ENCODE measurements at regions of chr4 and their contacts with region 1.

Region 1: GRCh38 chr4:8428293-8429097 is 12.0 kb downstream of the ACOX3 start:
- DNase-seq: peak; percentile 81 to 88 (median 88)
- H3K4me3 ChIP-seq: peak overlapping the region; percentile 53 to 93 (median 81)
- H3K27ac ChIP-seq: peak overlapping the region in 1 of 2 experiments; percentile 73
- H3K4me1 ChIP-seq: peaks cover 4 to 15% (median 15%) of the 10 kb centered on the region in 4 experiments
- H3K27me3 ChIP-seq: no peaks in the 10 kb centered on the region

Region 2: GRCh38 chr4:8236106-8236919 is 192.2 kb before region 1 on chr4:
- CTCF ChIA-PET with region 1: no interaction called
- POLR2A ChIA-PET with region 1: no interaction called
- DNase-seq: no peak
- H3K4me3 ChIP-seq: no peak overlapping the region
- H3K27ac ChIP-seq: no peak overlapping the region
- H3K4me1 ChIP-seq: peaks cover 0 to 25% (median 10%) of the 10 kb centered on the region in 4 experiments
- H3K27me3 ChIP-seq: no peaks in the 10 kb centered on the region

Region 3: GRCh38 chr4:8330821-8331574 is 97.5 kb before region 1 on chr4:
- CTCF ChIA-PET with region 1: no interaction called
- POLR2A ChIA-PET with region 1: no interaction called
- DNase-seq: no peak
- H3K4me3 ChIP-seq: no peak overlapping the region
- H3K27ac ChIP-seq: no peak overlapping the region
- H3K4me1 ChIP-seq: peaks cover 0 to 6% (median 4%) of the 10 kb centered on the region in 4 experiments
- H3K27me3 ChIP-seq: no peaks in the 10 kb centered on the region

Region 4: GRCh38 chr4:8410641-8411271 is 17.7 kb before region 1 on chr4:
- CTCF ChIA-PET with region 1: interaction called, 15 read pairs
- POLR2A ChIA-PET with region 1: no interaction called
- DNase-seq: peak; percentile 61 to 71 (median 61)
- H3K4me3 ChIP-seq: no peak overlapping the region
- H3K27ac ChIP-seq: no peak overlapping the region
- H3K4me1 ChIP-seq: peaks cover 0 to 12% (median 2%) of the 10 kb centered on the region in 4 experiments
- H3K27me3 ChIP-seq: no peaks in the 10 kb centered on the region

Region 5: GRCh38 chr4:8440492-8441341 is 12.2 kb after region 1 on chr4 and contains the starts of genes ACOX3 and TRMT44:
- CTCF ChIA-PET with region 1: interaction called, 16 read pairs
- POLR2A ChIA-PET with region 1: interaction called, 4 read pairs
- DNase-seq: peak; percentile 92 to 94 (median 93)
- H3K4me3 ChIP-seq: peak within 1 kb of the TSS; percentile 78 to 100 (median 98)
- H3K27ac ChIP-seq: peak within 1 kb of the TSS; percentile 95 to 98
- H3K4me1 ChIP-seq: peaks cover 9 to 40% (median 26%) of the 10 kb centered on the region in 4 experiments
- H3K27me3 ChIP-seq: no peaks in the 10 kb centered on the region

Region 6: DNA sequence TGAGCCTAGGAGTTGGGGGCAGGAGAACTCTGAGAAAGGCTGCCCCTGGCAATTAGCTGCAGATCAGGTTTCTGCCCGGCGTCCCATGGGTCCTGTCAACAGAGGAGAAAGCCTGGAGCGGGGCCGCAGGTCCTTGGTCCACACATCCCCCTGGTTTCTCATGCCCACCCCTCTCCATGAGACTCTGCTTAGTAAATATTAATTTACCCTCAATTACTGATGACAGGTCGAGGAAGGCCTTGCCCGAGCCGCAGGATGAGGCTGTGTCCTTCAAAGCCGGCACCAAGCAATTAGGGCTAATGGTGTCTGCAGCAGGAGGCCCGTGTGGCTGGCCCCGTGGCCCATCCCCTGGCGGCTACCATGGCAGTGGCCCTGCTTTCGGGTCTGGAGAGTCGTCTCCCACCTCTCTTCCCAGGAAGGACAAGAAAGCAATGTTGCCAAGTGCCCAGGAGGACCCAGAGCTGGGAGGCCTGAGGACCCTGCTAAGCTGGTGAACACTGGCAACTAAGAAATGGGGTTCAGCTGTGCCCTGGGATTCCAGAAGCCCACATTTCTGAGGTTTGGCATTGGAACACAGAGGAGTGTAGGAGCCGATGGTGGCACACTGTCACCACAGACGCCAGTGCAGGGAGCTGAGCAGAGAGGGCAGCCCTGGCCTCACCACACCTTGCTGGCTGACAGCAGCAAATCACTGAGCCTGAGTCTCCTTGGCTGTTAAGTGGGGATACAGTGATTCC is 278.7 kb after region 1 on chr4:
- CTCF ChIA-PET with region 1: no interaction called
- POLR2A ChIA-PET with region 1: no interaction called
- DNase-seq: no peak
- H3K4me3 ChIP-seq: no peak overlapping the region
- H3K27ac ChIP-seq: no peak overlapping the region
- H3K4me1 ChIP-seq: no peaks in the 10 kb centered on the region
- H3K27me3 ChIP-seq: peaks cover 0 to 61% (median 6%) of the 10 kb centered on the region in 5 experiments

Measured in common myeloid progenitor, CD34-positive (primary cell).